CD4-positive, alpha-beta memory T cell (primary cell): ENCODE measurements at regions of chr11 and their contacts with region 1.

Region 1: DNA sequence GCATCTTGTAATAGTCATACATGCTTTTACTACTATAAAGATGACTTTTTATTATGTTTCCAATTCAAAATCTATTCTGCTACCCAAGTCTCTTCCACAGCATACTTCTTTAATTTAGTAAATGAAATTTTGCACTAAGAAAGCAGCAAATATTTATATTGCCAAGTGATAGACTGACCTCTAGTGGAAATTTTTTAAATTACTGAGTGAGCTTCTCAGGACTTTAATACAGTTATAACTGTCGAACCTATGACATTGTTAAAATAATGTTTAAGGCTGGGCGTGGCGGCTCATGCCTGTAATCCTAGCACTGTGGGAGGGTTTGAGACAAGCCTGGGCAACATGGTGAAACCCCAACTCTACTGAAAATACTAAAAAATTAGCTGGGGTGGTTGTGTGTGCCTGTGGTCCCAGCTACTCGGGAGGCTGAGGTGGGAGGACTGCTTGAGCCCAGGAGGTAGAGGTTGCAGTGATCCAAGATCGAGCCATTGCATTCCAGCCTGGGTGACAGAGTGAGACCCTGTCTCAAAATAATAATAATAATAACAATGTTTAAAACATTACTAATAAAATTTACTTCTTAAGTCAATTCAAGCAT is 27.3 kb downstream of the STK33 start:
- DNase-seq: peak in 4 of 5 donors; percentile 21 to 34 (median 24)
- H3K4me3 ChIP-seq: no peak overlapping the region
- H3K4me3 Mint-ChIP-seq: no peak overlapping the region
- H3K27ac ChIP-seq: no peak overlapping the region
- H3K27ac Mint-ChIP-seq: no peak overlapping the region
- H3K4me1 ChIP-seq: no peaks in the 10 kb centered on the region
- H3K4me1 Mint-ChIP-seq: no peaks in the 10 kb centered on the region
- H3K27me3 ChIP-seq: no peaks in the 10 kb centered on the region
- H3K27me3 Mint-ChIP-seq: peaks cover 34 to 38% of the 10 kb centered on the region in 2 donors

Region 2: GRCh38 chr11:8192016-8192895 is 374.5 kb before region 1 on chr11:
- CTCF ChIA-PET with region 1: interaction called, 12 read pairs
- POLR2A ChIA-PET with region 1: no interaction called
- intact Hi-C with region 1: no loop called
- DNase-seq: peak in 3 of 5 donors; percentile 10 to 11 (median 11)
- H3K4me3 ChIP-seq: no peak overlapping the region
- H3K4me3 Mint-ChIP-seq: no peak overlapping the region
- H3K27ac ChIP-seq: no peak overlapping the region
- H3K27ac Mint-ChIP-seq: no peak overlapping the region
- H3K4me1 ChIP-seq: no peaks in the 10 kb centered on the region
- H3K4me1 Mint-ChIP-seq: no peaks in the 10 kb centered on the region
- H3K27me3 ChIP-seq: no peaks in the 10 kb centered on the region
- H3K27me3 Mint-ChIP-seq: peaks cover 16 to 33% of the 10 kb centered on the region in 2 donors

Region 3: GRCh38 chr11:8225589-8226036 is 341.1 kb before region 1 on chr11:
- CTCF ChIA-PET with region 1: interaction called, 19 read pairs
- POLR2A ChIA-PET with region 1: no interaction called
- intact Hi-C with region 1: no loop called
- DNase-seq: peak in 4 of 5 donors; percentile 35 to 52 (median 36)
- H3K4me3 ChIP-seq: no peak overlapping the region
- H3K4me3 Mint-ChIP-seq: no peak overlapping the region
- H3K27ac ChIP-seq: no peak overlapping the region
- H3K27ac Mint-ChIP-seq: no peak overlapping the region
- H3K4me1 ChIP-seq: no peaks in the 10 kb centered on the region
- H3K4me1 Mint-ChIP-seq: peaks cover 0 to 2% (median under 1%) of the 10 kb centered on the region in 4 donors
- H3K27me3 ChIP-seq: no peaks in the 10 kb centered on the region
- H3K27me3 Mint-ChIP-seq: peaks cover 0 to 4% of the 10 kb centered on the region in 2 donors

Region 4: GRCh38 chr11:8373521-8374432 is 192.9 kb before region 1 on chr11:
- CTCF ChIA-PET with region 1: no interaction called
- POLR2A ChIA-PET with region 1: no interaction called
- intact Hi-C with region 1: no loop called
- DNase-seq: no peak
- H3K4me3 ChIP-seq: no peak overlapping the region
- H3K4me3 Mint-ChIP-seq: no peak overlapping the region
- H3K27ac ChIP-seq: no peak overlapping the region
- H3K27ac Mint-ChIP-seq: no peak overlapping the region
- H3K4me1 ChIP-seq: no peaks in the 10 kb centered on the region
- H3K4me1 Mint-ChIP-seq: no peaks in the 10 kb centered on the region
- H3K27me3 ChIP-seq: no peaks in the 10 kb centered on the region
- H3K27me3 Mint-ChIP-seq: peaks cover 5 to 7% of the 10 kb centered on the region in 2 donors